ENCODE measurements at regions of chr1 and their contacts with region 1.

Region 1: DNA sequence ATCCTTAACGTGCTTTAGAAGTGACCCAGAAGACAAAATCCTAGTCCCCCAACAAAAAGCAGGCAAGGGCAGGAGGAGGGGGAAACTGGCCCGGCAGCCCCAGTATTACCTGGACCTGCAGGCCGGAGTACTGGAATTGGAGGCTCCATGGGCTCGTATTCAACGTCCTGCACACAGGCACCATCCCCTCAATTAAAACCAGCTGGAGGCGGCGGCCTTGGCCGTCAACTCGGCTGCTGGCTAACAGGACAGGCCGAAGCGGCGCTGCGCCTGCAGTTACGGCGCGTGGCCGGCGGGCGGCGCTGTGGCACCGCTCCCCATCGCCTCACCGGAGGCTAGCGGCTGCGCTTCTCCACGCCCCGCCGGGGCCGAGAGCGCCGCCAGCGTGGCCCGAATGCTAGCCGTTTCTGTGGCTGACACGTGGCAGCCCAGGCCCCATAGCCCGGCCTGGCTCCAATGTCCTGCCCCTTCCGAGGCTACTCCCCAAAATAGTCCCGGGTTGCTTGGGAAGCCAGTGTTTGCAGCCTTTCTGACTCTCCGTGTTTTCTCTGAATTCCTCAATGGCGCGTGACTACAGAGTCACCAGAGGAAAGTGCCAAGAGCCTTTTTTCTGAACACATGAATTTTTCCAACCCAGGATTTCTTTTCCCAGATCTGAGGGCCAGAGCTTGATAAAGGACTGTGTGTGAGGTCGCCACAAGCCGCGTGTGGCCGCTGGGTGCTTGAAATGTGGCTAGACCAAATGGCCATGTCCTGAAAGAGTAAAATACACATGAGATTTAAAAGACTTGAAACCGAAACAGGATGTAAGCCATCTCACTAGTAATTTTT is 82.5 kb downstream of the HHIPL2 start:
- DNase-seq: peak; percentile 91
- H3K4me3 ChIP-seq: peak overlapping the region in 3 of 4 donors; percentile 24 to 45 (median 32)
- H3K27ac ChIP-seq: peak overlapping the region; percentile 67 to 87 (median 83)
- H3K4me1 ChIP-seq: peaks cover 0 to 16% (median 4%) of the 10 kb centered on the region in 4 donors
- H3K27me3 ChIP-seq: no peaks in the 10 kb centered on the region
- CTCF ChIP-seq: peak; percentile 86 to 100 (median 99)
- EP300 ChIP-seq: no peak
- POLR2A ChIP-seq: no peak

Region 2: GRCh38 chr1:221478050-221478949 is 987.1 kb before region 1 on chr1:
- in situ Hi-C with region 1: loop called in 1 of 4 experiments (anchors 25 kb)
- intact Hi-C with region 1: no loop called
- DNase-seq: peak; percentile 33
- H3K4me3 ChIP-seq: no peak overlapping the region
- H3K27ac ChIP-seq: no peak overlapping the region
- H3K4me1 ChIP-seq: peaks cover 0 to 5% (median 0%) of the 10 kb centered on the region in 4 donors
- H3K27me3 ChIP-seq: no peaks in the 10 kb centered on the region
- CTCF ChIP-seq: peak in 3 of 5 experiments; percentile 32 to 40 (median 34)
- EP300 ChIP-seq: no peak
- POLR2A ChIP-seq: no peak

Region 3: GRCh38 chr1:222124602-222125001 is 340.8 kb before region 1 on chr1:
- in situ Hi-C with region 1: loop called in 1 of 4 experiments (anchors 25 kb)
- intact Hi-C with region 1: no loop called
- DNase-seq: no peak
- H3K4me3 ChIP-seq: no peak overlapping the region
- H3K27ac ChIP-seq: no peak overlapping the region
- H3K4me1 ChIP-seq: no peaks in the 10 kb centered on the region
- H3K27me3 ChIP-seq: no peaks in the 10 kb centered on the region
- CTCF ChIP-seq: peak in 3 of 5 experiments; percentile 12 to 15 (median 14)
- EP300 ChIP-seq: no peak
- POLR2A ChIP-seq: no peak

Region 4: GRCh38 chr1:222600281-222600680 is 134.9 kb after region 1 on chr1:
- in situ Hi-C with region 1: no loop called
- intact Hi-C with region 1: no loop called
- DNase-seq: no peak
- H3K4me3 ChIP-seq: no peak overlapping the region
- H3K27ac ChIP-seq: peak overlapping the region in 1 of 4 donors; percentile 52
- H3K4me1 ChIP-seq: peaks cover 0 to 6% (median 0%) of the 10 kb centered on the region in 4 donors
- H3K27me3 ChIP-seq: no peaks in the 10 kb centered on the region
- CTCF ChIP-seq: no peak
- EP300 ChIP-seq: no peak
- POLR2A ChIP-seq: no peak

Region 5: GRCh38 chr1:222634180-222635013 is 169.0 kb after region 1 on chr1:
- in situ Hi-C with region 1: loop called (anchors 5 to 10 kb)
- intact Hi-C with region 1: no loop called
- DNase-seq: peak; percentile 67
- H3K4me3 ChIP-seq: no peak overlapping the region
- H3K27ac ChIP-seq: no peak overlapping the region
- H3K4me1 ChIP-seq: no peaks in the 10 kb centered on the region
- H3K27me3 ChIP-seq: no peaks in the 10 kb centered on the region
- CTCF ChIP-seq: peak; percentile 84 to 90 (median 88)
- EP300 ChIP-seq: no peak
- POLR2A ChIP-seq: no peak

Region 6: GRCh38 chr1:222643938-222644635 is 178.7 kb after region 1 on chr1:
- in situ Hi-C with region 1: loop called in 2 of 4 experiments (anchors 10 kb)
- intact Hi-C with region 1: loop called (anchors 5 kb)
- DNase-seq: peak; percentile 99
- H3K4me3 ChIP-seq: peak overlapping the region; percentile 65 to 72 (median 68)
- H3K27ac ChIP-seq: peak overlapping the region; percentile 92 to 99 (median 94)
- H3K4me1 ChIP-seq: peaks cover 3 to 19% (median 11%) of the 10 kb centered on the region in 4 donors
- H3K27me3 ChIP-seq: no peaks in the 10 kb centered on the region
- CTCF ChIP-seq: no peak
- EP300 ChIP-seq: peak; percentile 37
- POLR2A ChIP-seq: peak; percentile 88

Region 7: GRCh38 chr1:222979561-222979960 is 514.1 kb after region 1 on chr1:
- in situ Hi-C with region 1: no loop called
- intact Hi-C with region 1: no loop called
- DNase-seq: no peak
- H3K4me3 ChIP-seq: no peak overlapping the region
- H3K27ac ChIP-seq: no peak overlapping the region
- H3K4me1 ChIP-seq: peaks cover 0 to 13% (median 0%) of the 10 kb centered on the region in 4 donors
- H3K27me3 ChIP-seq: no peaks in the 10 kb centered on the region
- CTCF ChIP-seq: no peak
- EP300 ChIP-seq: no peak
- POLR2A ChIP-seq: no peak

Region 8: GRCh38 chr1:223102797-223103533 is 637.5 kb after region 1 on chr1:
- in situ Hi-C with region 1: loop called in 1 of 4 experiments (anchors 25 kb)
- intact Hi-C with region 1: no loop called
- DNase-seq: no peak
- H3K4me3 ChIP-seq: no peak overlapping the region
- H3K27ac ChIP-seq: no peak overlapping the region
- H3K4me1 ChIP-seq: no peaks in the 10 kb centered on the region
- H3K27me3 ChIP-seq: no peaks in the 10 kb centered on the region
- CTCF ChIP-seq: no peak
- EP300 ChIP-seq: no peak
- POLR2A ChIP-seq: no peak

Measured in transverse colon (tissue), 4 donors.